Heart left ventricle (tissue), 16 donors: ENCODE measurements at regions of chr16 and their contacts with region 1.

Region 1: DNA sequence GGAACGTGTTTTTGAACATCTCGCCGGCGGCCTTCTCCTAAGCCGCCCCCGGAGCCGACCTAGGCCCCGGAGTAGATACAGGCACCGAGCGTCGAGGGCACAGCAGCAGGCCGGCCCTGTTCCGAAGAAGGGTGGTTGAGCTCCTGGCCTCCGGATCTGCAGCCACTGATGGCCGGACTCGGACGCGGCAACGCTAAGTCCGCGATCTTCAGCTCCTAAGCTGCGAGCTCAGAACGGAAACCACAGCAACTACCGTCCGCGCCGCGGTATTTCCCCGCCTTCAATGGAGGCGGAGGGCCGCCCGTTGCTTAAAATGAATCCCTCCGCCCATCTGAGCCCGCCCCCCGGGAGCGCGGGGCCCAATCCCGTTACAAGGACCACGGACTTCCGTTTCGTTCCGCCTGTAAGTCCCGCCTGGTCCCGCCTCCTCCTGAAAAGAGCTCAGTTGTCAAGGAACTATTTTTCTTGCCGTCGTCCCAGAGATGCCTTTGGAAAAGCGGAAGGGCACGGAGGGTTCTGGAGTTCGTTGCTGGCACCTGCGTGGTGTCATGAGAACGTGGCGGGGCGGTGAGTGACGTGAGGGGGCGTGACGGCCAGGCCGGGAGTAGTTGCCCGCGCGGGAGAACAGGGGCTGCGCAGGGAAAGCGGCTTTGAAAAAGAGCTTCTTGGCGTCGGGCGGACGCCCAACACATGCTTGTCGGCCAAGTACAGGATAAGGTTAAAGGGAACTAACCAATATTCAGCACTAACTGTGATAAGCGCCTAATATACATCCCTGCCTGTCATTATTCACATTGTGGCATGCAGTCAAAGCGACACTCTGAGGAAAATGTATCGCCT is at the start of gene CFAP20:
- DNase-seq: peak; percentile 98 to 100 (median 99)
- ATAC-seq: peak; percentile 95 to 97 (median 97)
- H3K4me3 ChIP-seq: peak within 1 kb of the TSS; percentile 67 to 93 (median 85)
- H3K27ac ChIP-seq: peak within 1 kb of the TSS; percentile 37 to 95 (median 90)
- H3K4me1 ChIP-seq: peaks cover 0 to 50% (median 40%) of the 10 kb centered on the region in 12 donors
- H3K27me3 ChIP-seq: no peaks in the 10 kb centered on the region
- CTCF ChIP-seq: no peak
- POLR2A ChIP-seq: peak; percentile 76 to 97
- total RNA-seq, gene CFAP20: 30.7 to 57.5 (median 36.3) TPM

Region 2: DNA sequence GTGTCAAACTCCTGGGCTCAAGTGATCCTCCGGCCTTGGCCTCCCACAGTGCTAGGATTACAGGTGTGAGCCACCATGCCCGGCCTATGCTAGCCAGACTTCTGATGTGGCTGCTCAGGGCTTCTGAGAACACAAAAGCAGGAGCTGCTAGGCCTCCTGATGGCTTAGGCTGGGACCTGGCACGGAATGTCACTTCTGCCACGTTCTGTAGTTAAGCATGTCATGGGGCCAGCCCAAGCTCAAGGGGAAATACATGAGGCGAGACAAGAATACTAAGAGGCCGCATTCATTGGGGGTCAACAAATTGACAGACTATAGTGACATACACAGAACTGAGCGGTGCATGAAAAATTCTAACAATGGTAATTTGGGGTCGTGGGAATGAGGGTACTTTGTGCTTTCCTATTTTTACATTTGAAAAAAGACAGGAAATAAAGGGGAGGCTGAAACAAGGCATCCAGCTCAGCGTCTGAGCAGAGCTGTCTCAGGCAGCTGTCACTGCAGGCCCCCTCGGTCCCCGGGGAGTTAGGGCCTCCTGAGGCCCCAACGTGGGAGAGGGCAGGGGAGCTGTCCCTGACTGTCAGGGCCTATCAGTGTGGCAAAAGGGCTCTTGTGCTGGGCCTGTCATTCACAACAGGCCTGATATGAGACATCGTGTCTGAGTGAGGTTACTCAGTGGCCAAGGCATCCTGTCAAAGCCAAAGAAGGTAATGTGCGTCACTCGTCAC is 26.5 kb before region 1 on chr16:
- intact Hi-C with region 1: loop called in 1 of 10 experiments (anchors 2 kb)
- DNase-seq: peak in 4 of 5 donors; percentile 56 to 81 (median 72)
- ATAC-seq: peak; percentile 95 to 96 (median 96)
- H3K4me3 ChIP-seq: no peak overlapping the region
- H3K27ac ChIP-seq: peak overlapping the region in 11 of 12 donors; percentile 24 to 88 (median 78)
- H3K4me1 ChIP-seq: peaks cover 0 to 33% (median 8%) of the 10 kb centered on the region in 12 donors
- H3K27me3 ChIP-seq: no peaks in the 10 kb centered on the region
- CTCF ChIP-seq: no peak
- POLR2A ChIP-seq: no peak

Region 3: DNA sequence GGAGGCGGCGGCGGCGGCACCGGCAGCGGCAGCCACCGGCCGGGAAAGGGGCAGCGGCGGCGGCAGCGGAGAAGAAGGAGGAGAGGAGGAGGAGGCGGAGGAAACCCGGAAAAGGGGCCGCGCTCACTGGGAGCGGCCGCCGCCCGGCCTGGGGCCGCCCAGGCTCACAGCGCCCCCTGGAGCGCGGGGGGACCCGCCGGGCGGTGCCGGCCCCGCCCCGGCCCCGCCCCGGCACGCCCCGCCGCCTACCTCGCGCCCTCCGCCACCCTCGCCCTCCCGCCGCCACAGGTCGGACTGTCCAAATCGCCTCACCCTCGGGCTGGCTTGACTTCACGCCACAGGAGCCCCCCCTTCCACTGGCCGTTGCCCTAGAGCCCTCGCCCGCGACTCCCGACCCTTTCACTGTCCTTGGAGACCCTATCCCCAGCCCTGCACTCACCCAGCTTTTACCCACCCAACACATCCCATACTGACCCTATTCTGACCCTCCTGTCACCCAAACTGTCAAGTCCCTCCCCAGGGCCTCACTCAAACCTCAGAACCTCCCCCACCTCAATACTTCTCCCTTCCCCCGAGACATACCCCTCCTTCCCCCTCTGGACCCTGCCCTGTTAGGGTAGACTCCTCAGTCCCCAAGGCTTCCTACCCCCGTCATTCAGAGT is 68.8 kb after region 1 on chr16 and contains the start of gene CSNK2A2:
- intact Hi-C with region 1: loop called in 1 of 10 experiments (anchors 5 kb)
- DNase-seq: peak; percentile 76 to 87 (median 81)
- ATAC-seq: peak; percentile 40 to 96 (median 90)
- H3K4me3 ChIP-seq: peak within 1 kb of the TSS; percentile 65 to 94 (median 88)
- H3K27ac ChIP-seq: peak within 1 kb of the TSS in 8 of 12 donors; percentile 31 to 76 (median 50)
- H3K4me1 ChIP-seq: peaks cover 0 to 35% (median 16%) of the 10 kb centered on the region in 12 donors
- H3K27me3 ChIP-seq: no peaks in the 10 kb centered on the region
- CTCF ChIP-seq: peak in 10 of 12 donors; percentile 15 to 66 (median 47)
- POLR2A ChIP-seq: no peak
- total RNA-seq, gene CSNK2A2: 25.6 to 48.4 (median 40.0) TPM